ENCODE measurements at regions of chr22 and their contacts with region 1.

Region 1: DNA sequence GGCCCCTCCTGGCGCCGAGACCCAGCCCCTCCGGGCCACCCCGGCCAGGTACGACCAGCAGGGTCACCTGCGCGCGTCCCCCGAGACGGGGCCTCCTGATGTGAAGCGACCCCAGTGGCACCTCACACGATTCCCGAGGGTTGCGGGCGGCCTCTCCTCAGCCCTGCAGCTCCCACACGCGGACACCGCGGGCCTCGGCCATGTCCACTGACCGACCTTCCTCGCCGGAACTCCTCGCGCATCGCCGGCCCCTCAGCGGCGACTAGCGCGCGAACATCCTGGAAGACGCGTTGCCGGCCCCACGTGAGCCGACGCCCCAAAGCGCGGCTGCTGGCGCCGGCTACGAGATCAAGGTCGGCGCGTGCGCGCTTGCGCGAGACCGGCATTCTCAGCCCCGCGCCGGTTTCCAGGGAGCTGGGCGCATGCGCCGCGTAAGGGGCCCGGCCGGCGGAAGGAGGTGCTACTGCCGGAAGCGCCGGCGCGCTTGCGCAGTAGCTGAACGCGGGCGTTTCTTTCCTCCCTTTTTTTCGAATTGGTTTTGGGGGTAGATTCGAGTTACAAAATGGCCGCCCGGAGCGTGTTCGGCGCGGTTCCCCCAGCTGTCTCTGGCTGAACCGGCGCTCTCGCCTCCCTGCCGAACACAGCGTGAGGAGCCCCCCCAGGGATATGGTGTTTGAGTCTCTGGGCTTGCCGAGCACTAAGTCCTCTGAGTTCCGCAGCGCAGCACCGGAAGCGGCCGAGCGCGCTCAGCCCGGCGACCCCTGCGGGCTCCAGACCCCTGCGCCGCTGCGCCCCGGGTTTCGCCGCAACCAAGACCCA is at the start of gene NUP50:
- DNase-seq: peak; percentile 95 to 98 (median 95)
- H3K4me3 ChIP-seq: peak within 1 kb of the TSS; percentile 95
- H3K27ac ChIP-seq: peak within 1 kb of the TSS; percentile 33 to 72
- H3K4me1 ChIP-seq: peaks cover 7% of the 10 kb centered on the region
- H3K27me3 ChIP-seq: no peaks in the 10 kb centered on the region
- CTCF ChIP-seq: peak in 1 of 3 donors; percentile 33
- EP300 ChIP-seq: no peak
- POLR2A ChIP-seq: peak; percentile 70
- total RNA-seq, gene NUP50: 35.8 to 58.6 (median 48.1) TPM

Region 2: DNA sequence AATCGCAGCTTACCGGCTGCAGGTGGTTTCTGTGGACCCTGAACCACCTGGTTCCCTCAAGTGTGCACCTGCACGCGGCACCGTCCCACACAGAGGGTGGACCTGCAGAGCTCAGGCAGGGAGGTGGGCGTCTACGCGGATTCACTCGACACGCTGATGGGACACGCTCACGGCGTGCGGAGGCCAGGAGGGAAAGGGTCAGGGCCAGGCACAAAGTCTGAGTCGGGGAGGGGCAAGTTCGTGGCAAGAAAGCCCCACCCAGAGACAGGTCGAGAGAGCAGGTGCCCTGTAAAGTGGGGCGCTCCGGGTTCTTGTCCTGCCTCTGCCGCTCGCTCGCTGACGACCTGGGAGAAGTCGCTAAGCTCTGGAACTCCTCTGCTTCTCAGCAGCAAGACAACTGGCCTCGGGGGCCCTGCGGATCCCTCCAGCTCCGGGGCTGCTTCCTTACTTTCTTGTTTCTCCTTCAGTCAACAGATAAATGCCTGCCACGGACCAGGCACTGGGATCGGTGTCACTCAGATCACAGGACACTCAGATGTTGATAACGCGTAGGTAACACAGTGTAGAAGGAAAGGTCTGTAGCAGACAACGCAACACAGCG is 72.3 kb before region 1 on chr22:
- intact Hi-C with region 1: no loop called
- DNase-seq: no peak
- H3K4me3 ChIP-seq: no peak overlapping the region
- H3K27ac ChIP-seq: no peak overlapping the region
- H3K4me1 ChIP-seq: no peaks in the 10 kb centered on the region
- H3K27me3 ChIP-seq: no peaks in the 10 kb centered on the region
- CTCF ChIP-seq: no peak
- EP300 ChIP-seq: no peak
- POLR2A ChIP-seq: no peak

Region 3: DNA sequence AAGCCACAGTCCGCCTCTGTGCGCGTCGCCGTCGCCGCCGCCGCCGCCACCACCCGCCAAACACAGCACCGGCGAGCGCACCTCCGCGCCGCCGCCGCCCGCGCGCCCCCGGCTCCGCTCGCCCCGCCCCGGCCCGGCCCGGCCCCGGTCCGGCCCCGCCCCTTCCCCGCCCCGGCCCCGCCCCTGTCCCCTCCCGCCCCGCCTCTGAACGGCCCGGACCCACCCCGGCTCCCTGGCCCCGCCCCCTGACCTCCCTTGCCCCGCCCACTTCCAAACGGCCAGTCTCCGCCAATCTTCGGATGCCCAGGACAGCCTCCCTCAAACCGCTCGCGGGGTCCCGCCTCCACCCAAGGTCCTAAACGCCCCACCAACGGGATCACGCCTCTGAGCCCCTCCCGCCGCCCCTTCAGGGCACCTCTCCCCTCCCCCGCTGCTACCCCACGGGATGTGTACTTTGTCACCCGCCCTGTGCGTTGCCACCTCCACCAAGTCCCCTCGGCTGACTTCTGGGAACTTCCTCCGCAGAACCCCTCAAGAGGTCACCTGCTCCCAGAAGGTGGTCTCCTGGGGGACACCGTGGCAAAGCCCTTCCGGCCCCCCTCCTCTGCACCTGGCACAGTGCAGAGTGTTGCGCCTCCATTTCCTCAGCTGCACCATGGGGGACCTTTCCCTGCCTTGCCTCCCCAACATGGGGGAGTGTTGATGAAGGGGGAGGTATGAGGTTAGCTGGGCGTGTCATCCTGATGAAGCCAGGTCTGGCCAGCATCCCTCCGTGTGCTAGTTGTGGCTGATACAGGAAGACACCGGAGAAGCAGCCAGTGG is 77.4 kb after region 1 on chr22 and contains the start of gene KIAA0930:
- intact Hi-C with region 1: loop called in 1 of 4 experiments (anchors 10 kb)
- DNase-seq: peak; percentile 85 to 92 (median 87)
- H3K4me3 ChIP-seq: peak within 1 kb of the TSS; percentile 76
- H3K27ac ChIP-seq: peak within 1 kb of the TSS; percentile 32 to 56
- H3K4me1 ChIP-seq: peaks cover 7% of the 10 kb centered on the region
- H3K27me3 ChIP-seq: no peaks in the 10 kb centered on the region
- CTCF ChIP-seq: no peak
- EP300 ChIP-seq: no peak
- POLR2A ChIP-seq: no peak
- total RNA-seq, gene KIAA0930: 14.8 to 40.0 (median 33.9) TPM

Region 4: GRCh38 chr22:45254789-45255278 is 91.2 kb after region 1 on chr22:
- intact Hi-C with region 1: loop called in 1 of 4 experiments (anchors 5 kb)
- DNase-seq: no peak
- H3K4me3 ChIP-seq: no peak overlapping the region
- H3K27ac ChIP-seq: no peak overlapping the region
- H3K4me1 ChIP-seq: no peaks in the 10 kb centered on the region
- H3K27me3 ChIP-seq: no peaks in the 10 kb centered on the region
- CTCF ChIP-seq: no peak
- EP300 ChIP-seq: no peak
- POLR2A ChIP-seq: no peak

Measured in ovary (tissue), 10 donors.